ENCODE measurements at regions of chr1 and their contacts with region 1.

Region 1: DNA sequence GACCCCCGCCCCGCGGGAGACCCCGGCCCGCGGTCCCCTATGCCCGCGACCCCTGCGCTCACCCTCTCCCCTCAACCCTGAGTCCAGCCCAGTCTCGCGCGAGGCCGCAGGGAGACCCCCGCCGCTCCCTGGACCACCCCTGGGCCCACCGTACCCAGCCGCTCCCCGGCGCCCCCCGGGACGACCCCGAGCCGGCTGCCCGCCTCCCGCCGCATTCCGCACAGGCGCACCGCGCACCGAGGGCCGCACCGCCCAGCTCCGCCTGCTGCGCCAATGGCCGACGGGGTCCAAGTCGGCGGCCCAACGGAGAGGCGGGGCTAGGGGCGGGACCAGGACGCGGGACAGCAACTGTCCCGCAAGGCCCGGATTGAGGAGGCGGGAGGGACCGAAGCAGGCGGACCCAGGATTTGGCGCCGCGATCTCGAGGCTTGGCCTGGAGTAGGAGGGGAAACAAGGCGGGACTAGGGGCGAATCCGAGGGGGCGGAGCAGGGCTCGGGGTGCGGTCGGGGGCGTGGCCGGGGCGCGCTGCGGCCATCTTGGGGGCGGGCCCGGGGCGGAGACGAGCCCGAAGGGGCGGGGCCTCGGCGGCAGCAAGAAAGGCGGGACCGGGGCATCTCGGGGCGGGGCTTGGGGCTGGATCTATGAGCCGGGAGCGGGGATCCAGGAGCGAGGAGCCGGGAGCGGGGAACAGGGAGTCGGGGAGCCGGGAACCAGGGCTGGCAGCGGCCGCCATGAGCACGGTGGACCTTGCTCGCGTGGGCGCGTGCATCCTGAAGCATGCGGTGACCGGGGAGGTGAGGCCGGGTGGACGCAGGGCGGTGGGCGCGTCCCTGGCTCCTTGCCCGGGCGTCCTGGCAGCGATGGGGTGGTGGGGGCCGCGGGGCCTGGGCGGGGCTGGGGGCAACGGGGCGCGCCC is at the start of gene PRXL2B:
- DNase-seq: peak; percentile 97 to 98 (median 98)
- H3K4me3 ChIP-seq: peak within 1 kb of the TSS; percentile 52 to 86 (median 74)
- H3K27ac ChIP-seq: peak within 1 kb of the TSS; percentile 83 to 93
- H3K4me1 ChIP-seq: peaks cover 4 to 44% (median 37%) of the 10 kb centered on the region in 4 experiments
- H3K27me3 ChIP-seq: no peaks in the 10 kb centered on the region

Region 2: GRCh38 chr1:2504225-2504948 is 82.0 kb before region 1 on chr1:
- CTCF ChIA-PET with region 1: no interaction called
- POLR2A ChIA-PET with region 1: no interaction called
- DNase-seq: no peak
- H3K4me3 ChIP-seq: no peak overlapping the region
- H3K27ac ChIP-seq: no peak overlapping the region
- H3K4me1 ChIP-seq: peaks cover 0 to 20% (median 16%) of the 10 kb centered on the region in 4 experiments
- H3K27me3 ChIP-seq: peaks cover 0 to 19% (median 0%) of the 10 kb centered on the region in 5 experiments

Region 3: GRCh38 chr1:2556277-2556677 is 30.1 kb before region 1 on chr1 and contains the start of gene TNFRSF14:
- CTCF ChIA-PET with region 1: interaction called, 30 read pairs
- POLR2A ChIA-PET with region 1: interaction called, 51 read pairs
- DNase-seq: peak; percentile 81 to 95 (median 92)
- H3K4me3 ChIP-seq: peak within 1 kb of the TSS; percentile 37 to 89 (median 80)
- H3K27ac ChIP-seq: peak within 1 kb of the TSS; percentile 72 to 89
- H3K4me1 ChIP-seq: peaks cover 0 to 52% (median 44%) of the 10 kb centered on the region in 4 experiments
- H3K27me3 ChIP-seq: no peaks in the 10 kb centered on the region

Region 4: DNA sequence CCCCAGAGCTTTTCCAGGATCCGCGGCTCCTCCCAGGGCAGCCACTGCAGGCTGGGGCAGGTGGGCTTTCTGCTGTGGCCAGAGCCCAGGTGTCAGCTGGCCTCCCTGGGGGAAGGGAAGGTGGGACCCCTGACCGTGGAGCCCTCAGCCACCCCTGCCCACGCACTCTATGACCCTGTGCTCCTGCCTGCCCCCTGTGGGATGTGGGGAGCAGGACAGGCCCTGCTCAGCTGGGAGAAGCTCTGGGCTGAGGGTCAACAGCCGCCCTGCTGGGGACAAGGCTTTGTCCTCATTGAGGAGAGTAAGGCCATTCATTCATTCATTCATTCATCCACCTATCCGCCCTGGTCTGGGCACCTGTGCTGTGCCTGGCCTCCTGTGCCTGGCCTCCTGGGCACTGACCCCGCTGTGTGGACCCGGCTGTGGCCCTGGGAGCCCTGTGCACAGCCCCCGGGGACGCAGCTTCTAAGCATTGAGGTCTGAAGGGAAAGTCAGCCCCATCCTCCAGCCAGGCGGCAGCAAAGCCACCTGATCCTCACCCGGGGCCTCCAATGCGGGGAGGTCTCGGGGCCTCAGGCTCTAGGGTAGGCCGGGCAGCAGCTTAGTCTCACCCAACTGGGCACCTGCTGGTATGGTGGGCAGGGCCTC is 24.4 kb before region 1 on chr1:
- CTCF ChIA-PET with region 1: interaction called, 27 read pairs
- POLR2A ChIA-PET with region 1: interaction called, 51 read pairs
- DNase-seq: no peak
- H3K4me3 ChIP-seq: no peak overlapping the region
- H3K27ac ChIP-seq: no peak overlapping the region
- H3K4me1 ChIP-seq: peaks cover 0 to 17% (median 12%) of the 10 kb centered on the region in 4 experiments
- H3K27me3 ChIP-seq: no peaks in the 10 kb centered on the region